ENCODE measurements at regions of chr10 and their contacts with region 1.

Region 1: DNA sequence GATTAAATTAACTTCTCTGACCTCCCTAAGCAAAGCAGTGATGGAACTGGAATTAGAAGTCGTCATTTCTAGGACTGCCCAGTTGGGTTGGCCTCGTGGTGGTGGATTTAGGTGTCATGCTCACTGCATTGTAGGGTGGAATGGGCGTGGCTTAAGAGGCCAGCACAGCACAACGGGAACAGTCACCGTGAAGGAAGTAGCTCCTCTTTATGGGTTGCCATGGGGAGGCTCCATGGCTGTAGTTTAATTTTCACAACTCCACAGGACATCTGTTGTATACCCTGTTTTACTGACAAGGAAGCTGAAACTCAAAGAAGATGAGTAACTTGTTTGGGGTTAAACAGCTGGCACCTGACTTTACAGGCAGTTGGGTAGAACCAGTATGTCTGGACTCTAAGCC is 208.3 kb downstream of the CELF2 start:
- DNase-seq: peak in 5 of 9 donors; percentile 34 to 61 (median 47)
- ATAC-seq: peak; percentile 85
- H3K4me3 ChIP-seq: peak overlapping the region; percentile 19
- H3K4me3 Mint-ChIP-seq: peak overlapping the region in 9 of 10 donors; percentile 47 to 76 (median 67)
- H3K27ac ChIP-seq: peak overlapping the region; percentile 59
- H3K27ac Mint-ChIP-seq: peak overlapping the region; percentile 84 to 96 (median 87)
- H3K4me1 ChIP-seq: peaks cover 69 to 80% of the 10 kb centered on the region in 2 donors
- H3K4me1 Mint-ChIP-seq: peaks cover 65 to 100% (median 95%) of the 10 kb centered on the region in 7 donors
- H3K27me3 ChIP-seq: no peaks in the 10 kb centered on the region
- H3K27me3 Mint-ChIP-seq: no peaks in the 10 kb centered on the region

Region 2: GRCh38 chr10:11113156-11113555 is 112.8 kb before region 1 on chr10:
- CTCF ChIA-PET with region 1: no interaction called
- POLR2A ChIA-PET with region 1: no interaction called
- intact Hi-C with region 1: loop called in 1 of 2 experiments (anchors 1 kb)
- DNase-seq: peak in 7 of 9 donors; percentile 48 to 69 (median 65)
- ATAC-seq: peak; percentile 97
- H3K4me3 ChIP-seq: no peak overlapping the region
- H3K4me3 Mint-ChIP-seq: peak overlapping the region in 9 of 10 donors; percentile 12 to 85 (median 63)
- H3K27ac ChIP-seq: peak overlapping the region; percentile 9
- H3K27ac Mint-ChIP-seq: peak overlapping the region in 8 of 9 donors; percentile 0 to 92 (median 72)
- H3K4me1 ChIP-seq: peaks cover 0 to 9% of the 10 kb centered on the region in 2 donors
- H3K4me1 Mint-ChIP-seq: peaks cover 10 to 56% (median 38%) of the 10 kb centered on the region in 7 donors
- H3K27me3 ChIP-seq: no peaks in the 10 kb centered on the region
- H3K27me3 Mint-ChIP-seq: peaks cover 0 to 5% (median 0%) of the 10 kb centered on the region in 5 donors

Region 3: DNA sequence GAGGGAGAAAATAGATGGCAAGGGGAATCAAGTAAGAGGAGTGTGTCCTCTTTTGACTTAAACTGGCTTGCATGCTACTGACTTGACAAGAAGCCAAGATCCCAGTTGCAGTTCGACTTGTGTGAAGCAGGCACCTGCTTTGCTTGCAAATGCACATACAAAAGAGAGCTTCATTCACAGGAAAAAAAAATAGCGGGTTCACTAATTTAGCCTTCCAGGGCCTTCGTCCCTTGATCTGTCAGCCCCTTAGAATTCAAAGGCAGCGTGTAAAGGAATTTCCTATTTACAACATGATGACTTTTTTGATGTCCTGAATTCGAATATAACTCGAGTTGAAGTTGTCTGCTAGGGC is 16.1 kb before region 1 on chr10:
- CTCF ChIA-PET with region 1: no interaction called
- POLR2A ChIA-PET with region 1: interaction called, 4 read pairs
- intact Hi-C with region 1: loop called in 1 of 2 experiments (anchors 2 kb)
- DNase-seq: peak in 4 of 9 donors; percentile 26 to 44 (median 31)
- ATAC-seq: no peak
- H3K4me3 ChIP-seq: peak overlapping the region; percentile 39
- H3K4me3 Mint-ChIP-seq: peak overlapping the region; percentile 73 to 89 (median 82)
- H3K27ac ChIP-seq: peak overlapping the region; percentile 70
- H3K27ac Mint-ChIP-seq: peak overlapping the region; percentile 81 to 94 (median 87)
- H3K4me1 ChIP-seq: peaks cover 75 to 93% of the 10 kb centered on the region in 2 donors
- H3K4me1 Mint-ChIP-seq: peaks cover 76 to 100% (median 98%) of the 10 kb centered on the region in 7 donors
- H3K27me3 ChIP-seq: no peaks in the 10 kb centered on the region
- H3K27me3 Mint-ChIP-seq: no peaks in the 10 kb centered on the region

Region 4: DNA sequence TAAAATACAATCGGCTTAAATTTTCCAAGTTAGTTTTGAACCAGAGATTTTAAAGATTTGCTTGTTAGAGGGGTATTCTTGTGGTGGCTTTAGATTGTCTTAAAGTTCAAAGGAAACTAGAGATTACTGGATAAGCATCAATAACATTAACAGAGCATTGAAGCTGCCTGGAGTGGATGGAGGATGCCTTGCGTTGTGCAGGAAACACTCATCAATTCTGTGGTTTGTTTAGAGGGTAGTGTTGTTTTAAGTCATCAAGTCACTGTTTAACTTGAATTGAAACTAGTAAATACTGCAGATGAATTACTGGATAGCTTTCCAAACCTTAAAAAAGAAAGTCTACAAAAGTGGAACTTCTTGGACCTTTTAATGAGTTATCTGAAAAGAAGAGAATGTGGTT is 10.3 kb after region 1 on chr10:
- CTCF ChIA-PET with region 1: interaction called, 9 read pairs
- POLR2A ChIA-PET with region 1: interaction called, 8 read pairs
- intact Hi-C with region 1: loop called (anchors 1 kb)
- DNase-seq: peak in 6 of 9 donors; percentile 29 to 56 (median 48)
- ATAC-seq: peak; percentile 83
- H3K4me3 ChIP-seq: no peak overlapping the region
- H3K4me3 Mint-ChIP-seq: peak overlapping the region in 9 of 10 donors; percentile 44 to 68 (median 63)
- H3K27ac ChIP-seq: peak overlapping the region; percentile 44
- H3K27ac Mint-ChIP-seq: peak overlapping the region; percentile 26 to 92 (median 77)
- H3K4me1 ChIP-seq: peaks cover 61 to 82% of the 10 kb centered on the region in 2 donors
- H3K4me1 Mint-ChIP-seq: peaks cover 69 to 94% (median 92%) of the 10 kb centered on the region in 7 donors
- H3K27me3 ChIP-seq: no peaks in the 10 kb centered on the region
- H3K27me3 Mint-ChIP-seq: no peaks in the 10 kb centered on the region

Region 5: GRCh38 chr10:11245510-11245909 is 19.6 kb after region 1 on chr10:
- CTCF ChIA-PET with region 1: interaction called, 9 read pairs
- POLR2A ChIA-PET with region 1: interaction called, 3 read pairs
- intact Hi-C with region 1: loop called in 1 of 2 experiments (anchors 2 kb)
- DNase-seq: no peak
- ATAC-seq: no peak
- H3K4me3 ChIP-seq: no peak overlapping the region
- H3K4me3 Mint-ChIP-seq: no peak overlapping the region
- H3K27ac ChIP-seq: peak overlapping the region; percentile 2
- H3K27ac Mint-ChIP-seq: no peak overlapping the region
- H3K4me1 ChIP-seq: peaks cover 33 to 58% of the 10 kb centered on the region in 2 donors
- H3K4me1 Mint-ChIP-seq: peaks cover 28 to 66% (median 44%) of the 10 kb centered on the region in 7 donors
- H3K27me3 ChIP-seq: no peaks in the 10 kb centered on the region
- H3K27me3 Mint-ChIP-seq: no peaks in the 10 kb centered on the region

Region 6: GRCh38 chr10:11264296-11265048 is 38.5 kb after region 1 on chr10:
- CTCF ChIA-PET with region 1: interaction called, 6 read pairs
- POLR2A ChIA-PET with region 1: interaction called, 3 read pairs
- intact Hi-C with region 1: loop called in 1 of 2 experiments (anchors 5 kb)
- DNase-seq: no peak
- ATAC-seq: no peak
- H3K4me3 ChIP-seq: no peak overlapping the region
- H3K4me3 Mint-ChIP-seq: peak overlapping the region in 4 of 10 donors; percentile 13 to 38 (median 34)
- H3K27ac ChIP-seq: peak overlapping the region; percentile 22
- H3K27ac Mint-ChIP-seq: peak overlapping the region in 8 of 9 donors; percentile 57 to 87 (median 74)
- H3K4me1 ChIP-seq: peaks cover 18 to 22% of the 10 kb centered on the region in 2 donors
- H3K4me1 Mint-ChIP-seq: peaks cover 58 to 99% (median 94%) of the 10 kb centered on the region in 7 donors
- H3K27me3 ChIP-seq: no peaks in the 10 kb centered on the region
- H3K27me3 Mint-ChIP-seq: no peaks in the 10 kb centered on the region

Measured in naive thymus-derived CD4-positive, alpha-beta T cell (primary cell).